AG04449 (cell line): ENCODE measurements at regions of chr2 and their contacts with region 1.

Region 1: GRCh38 chr2:7427293-7428060 is 510.3 kb downstream of the RNF144A start:
- DNase-seq: no peak
- H3K4me3 ChIP-seq: no peak overlapping the region
- CTCF ChIP-seq: peak; percentile 46

Region 2: GRCh38 chr2:7154656-7155055 is 272.8 kb before region 1 on chr2:
- CTCF ChIA-PET with region 1: no interaction called
- POLR2A ChIA-PET with region 1: no interaction called
- DNase-seq: no peak
- H3K4me3 ChIP-seq: no peak overlapping the region
- CTCF ChIP-seq: no peak

Region 3: DNA sequence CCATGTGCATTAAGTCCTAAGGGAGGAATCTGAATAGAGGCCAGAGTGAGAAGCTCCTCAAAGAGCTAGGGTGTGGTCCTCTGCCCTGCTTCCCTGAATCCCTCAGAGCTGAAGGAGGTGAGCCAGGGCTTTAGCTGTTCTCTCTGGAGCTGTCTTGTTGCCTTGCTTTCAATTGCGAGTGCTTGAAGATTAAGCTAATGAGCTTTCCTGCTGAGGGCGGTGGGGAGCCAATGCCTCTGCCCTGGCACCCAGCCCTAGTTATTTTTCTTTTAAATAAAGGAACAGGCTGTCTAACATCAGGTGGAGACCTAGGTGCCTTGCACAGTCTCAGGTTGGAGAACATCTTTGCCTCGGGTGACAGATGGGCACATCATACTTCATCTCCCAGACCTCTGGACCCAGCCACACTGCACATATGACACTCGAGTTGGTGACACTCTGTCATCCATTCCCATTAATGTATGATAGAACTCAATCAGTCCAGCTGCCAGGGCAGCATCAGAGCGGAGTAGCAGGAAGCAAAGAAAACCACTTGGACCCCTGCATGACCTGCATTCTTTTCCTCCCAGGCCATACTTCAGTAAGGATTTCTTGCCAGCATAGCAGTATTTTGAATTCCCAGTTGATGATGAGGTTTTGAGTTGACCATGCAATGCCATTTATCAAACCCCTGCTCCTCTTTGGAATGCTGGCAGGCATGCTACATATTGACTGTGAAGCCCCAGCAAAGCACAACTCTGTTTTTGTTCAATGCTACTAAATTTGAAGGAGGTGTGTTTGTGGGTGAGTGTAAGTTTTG is 217.5 kb before region 1 on chr2:
- CTCF ChIA-PET with region 1: no interaction called
- POLR2A ChIA-PET with region 1: no interaction called
- DNase-seq: peak; percentile 56
- H3K4me3 ChIP-seq: no peak overlapping the region
- CTCF ChIP-seq: no peak

Region 4: GRCh38 chr2:7392076-7392787 is 35.2 kb before region 1 on chr2:
- CTCF ChIA-PET with region 1: no interaction called
- POLR2A ChIA-PET with region 1: no interaction called
- DNase-seq: no peak
- H3K4me3 ChIP-seq: no peak overlapping the region
- CTCF ChIP-seq: no peak

Region 5: GRCh38 chr2:7407906-7408680 is 19.4 kb before region 1 on chr2:
- CTCF ChIA-PET with region 1: interaction called, 11 read pairs
- POLR2A ChIA-PET with region 1: no interaction called
- DNase-seq: no peak
- H3K4me3 ChIP-seq: no peak overlapping the region
- CTCF ChIP-seq: no peak

Region 6: DNA sequence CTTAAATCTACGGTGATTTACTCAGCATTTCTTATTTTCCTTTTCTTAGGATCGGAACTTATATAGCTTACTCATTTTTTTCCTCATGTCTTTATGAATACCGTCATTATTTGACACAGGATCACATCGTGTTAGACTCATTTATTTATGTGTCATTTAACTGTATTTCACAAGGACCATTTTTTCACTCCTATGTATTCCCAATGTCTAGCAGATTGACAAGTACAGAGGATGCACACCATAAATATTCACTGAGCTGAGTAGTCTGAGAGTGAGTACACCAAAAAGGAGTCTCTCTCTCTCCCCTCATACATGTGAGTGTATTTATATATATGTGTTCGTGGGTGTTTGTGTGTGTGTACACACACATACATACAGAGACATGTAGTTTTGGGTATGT is 63.2 kb after region 1 on chr2:
- CTCF ChIA-PET with region 1: no interaction called
- POLR2A ChIA-PET with region 1: no interaction called
- DNase-seq: no peak
- H3K4me3 ChIP-seq: no peak overlapping the region
- CTCF ChIP-seq: no peak

Region 7: GRCh38 chr2:7672027-7672684 is 244.7 kb after region 1 on chr2:
- CTCF ChIA-PET with region 1: interaction called, 16 read pairs
- POLR2A ChIA-PET with region 1: no interaction called
- DNase-seq: no peak
- H3K4me3 ChIP-seq: no peak overlapping the region
- CTCF ChIP-seq: peak; percentile 44